CD4-positive, alpha-beta memory T cell (primary cell): ENCODE measurements at regions of chr14 and their contacts with region 1.

Region 1: GRCh38 chr14:70600382-70601157 is at the start of gene MED6:
- DNase-seq: peak; percentile 89 to 95 (median 90)
- H3K4me3 ChIP-seq: peak within 1 kb of the TSS; percentile 99
- H3K4me3 Mint-ChIP-seq: peak within 1 kb of the TSS; percentile 96 to 100 (median 100)
- H3K27ac ChIP-seq: peak within 1 kb of the TSS; percentile 77
- H3K27ac Mint-ChIP-seq: peak within 1 kb of the TSS; percentile 87 to 99 (median 98)
- H3K4me1 ChIP-seq: peaks cover 21% of the 10 kb centered on the region
- H3K4me1 Mint-ChIP-seq: peaks cover 12 to 34% (median 22%) of the 10 kb centered on the region in 4 donors
- H3K27me3 ChIP-seq: no peaks in the 10 kb centered on the region
- H3K27me3 Mint-ChIP-seq: peaks cover 0 to 3% of the 10 kb centered on the region in 2 donors
- total RNA-seq, gene MED6: 57.0 to 61.8 TPM

Region 2: DNA sequence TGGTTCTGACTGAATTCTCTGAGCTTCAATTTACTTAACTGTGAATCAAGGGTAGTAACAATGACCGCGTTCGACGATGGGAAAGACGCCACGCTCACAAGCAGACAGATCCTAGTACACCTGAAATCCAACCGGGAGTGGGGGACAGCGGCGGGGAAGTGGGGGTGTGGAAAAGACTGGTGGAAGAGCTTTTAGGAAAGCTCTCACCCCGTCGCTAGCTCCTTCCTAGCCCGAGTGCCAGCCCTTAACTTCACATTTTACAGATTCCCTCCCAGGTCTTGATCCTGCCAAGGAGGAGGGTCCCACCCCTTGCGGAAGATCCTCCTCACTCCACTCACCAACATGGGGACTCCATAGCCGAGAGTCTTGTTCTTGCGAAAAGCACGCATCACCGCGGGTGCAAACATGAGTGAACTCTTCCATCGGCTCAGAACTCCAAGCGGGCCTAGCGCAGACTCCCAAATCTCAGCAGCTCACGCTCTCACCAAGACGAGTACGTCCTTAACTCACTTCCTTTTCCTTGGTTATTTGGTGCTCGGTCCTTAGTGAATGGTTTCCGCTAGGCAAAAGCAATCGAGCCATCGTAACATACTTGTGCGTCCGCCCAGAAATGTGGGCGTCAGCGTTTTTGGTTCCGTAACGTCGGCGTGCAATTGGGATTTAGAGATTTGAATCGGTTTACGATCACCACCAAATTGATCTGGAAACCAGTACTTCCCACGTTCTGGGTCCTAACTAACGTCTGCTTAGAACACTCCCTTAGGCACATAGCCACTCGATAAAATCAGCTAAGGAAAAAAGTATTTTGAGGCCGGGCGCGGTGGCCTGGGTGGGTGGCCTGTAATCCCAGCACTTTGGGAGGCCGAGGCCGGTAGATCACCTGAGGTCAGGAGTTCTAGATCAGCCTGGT is 241.1 kb before region 1 on chr14 and contains the start of gene COX16:
- CTCF ChIA-PET with region 1: no interaction called
- POLR2A ChIA-PET with region 1: no interaction called
- intact Hi-C with region 1: loop called (anchors 1 kb)
- DNase-seq: peak; percentile 76 to 88 (median 82)
- H3K4me3 ChIP-seq: peak within 1 kb of the TSS; percentile 70 to 95
- H3K4me3 Mint-ChIP-seq: peak within 1 kb of the TSS; percentile 96 to 100 (median 100)
- H3K27ac ChIP-seq: peak within 1 kb of the TSS; percentile 62
- H3K27ac Mint-ChIP-seq: peak within 1 kb of the TSS; percentile 84 to 98 (median 97)
- H3K4me1 ChIP-seq: peaks cover 40% of the 10 kb centered on the region
- H3K4me1 Mint-ChIP-seq: peaks cover 35 to 53% (median 45%) of the 10 kb centered on the region in 4 donors
- H3K27me3 ChIP-seq: no peaks in the 10 kb centered on the region
- H3K27me3 Mint-ChIP-seq: no peaks in the 10 kb centered on the region
- total RNA-seq, gene COX16: 24.5 to 26.2 TPM

Region 3: GRCh38 chr14:70416725-70417349 is 183.7 kb before region 1 on chr14 and contains the start of gene SYNJ2BP:
- CTCF ChIA-PET with region 1: no interaction called
- POLR2A ChIA-PET with region 1: no interaction called
- intact Hi-C with region 1: loop called (anchors 10 kb)
- DNase-seq: peak; percentile 46 to 59 (median 57)
- H3K4me3 ChIP-seq: peak within 1 kb of the TSS; percentile 81 to 87
- H3K4me3 Mint-ChIP-seq: peak within 1 kb of the TSS; percentile 90 to 99 (median 94)
- H3K27ac ChIP-seq: peak within 1 kb of the TSS; percentile 59
- H3K27ac Mint-ChIP-seq: peak within 1 kb of the TSS; percentile 84 to 97 (median 90)
- H3K4me1 ChIP-seq: peaks cover 30% of the 10 kb centered on the region
- H3K4me1 Mint-ChIP-seq: peaks cover 15 to 48% (median 31%) of the 10 kb centered on the region in 4 donors
- H3K27me3 ChIP-seq: no peaks in the 10 kb centered on the region
- H3K27me3 Mint-ChIP-seq: peaks cover 2 to 4% of the 10 kb centered on the region in 2 donors
- total RNA-seq, gene SYNJ2BP: 17.0 to 19.8 TPM

Region 4: DNA sequence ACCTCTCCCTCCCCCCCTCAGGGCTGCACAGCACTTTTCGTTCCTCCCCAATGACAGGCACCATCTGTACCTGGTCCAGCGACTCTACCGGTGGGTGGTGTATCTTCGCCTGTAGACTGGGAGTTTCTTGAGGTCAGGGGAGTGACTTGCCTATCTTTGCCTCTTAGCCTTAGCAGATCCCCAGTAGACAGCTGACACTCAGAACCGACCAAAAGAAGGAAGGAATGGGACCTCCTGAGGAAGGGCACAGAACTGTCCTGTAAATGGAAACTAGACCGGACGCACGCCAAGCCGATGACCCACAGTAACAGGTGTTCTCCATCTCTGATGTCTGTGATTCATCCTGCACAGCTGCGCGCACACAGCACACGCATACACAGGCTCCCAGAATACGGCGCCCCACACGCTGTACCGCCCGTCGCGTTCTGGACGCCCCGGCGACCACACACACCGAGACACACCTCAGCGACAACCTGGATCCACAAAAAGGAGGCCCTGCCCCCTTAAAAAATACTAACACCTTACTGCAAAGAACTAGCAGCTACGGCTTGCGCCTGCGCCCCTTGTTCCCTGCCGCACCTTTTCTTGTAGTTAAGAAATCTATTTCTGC is 40.5 kb after region 1 on chr14:
- CTCF ChIA-PET with region 1: interaction called, 3 read pairs
- POLR2A ChIA-PET with region 1: interaction called, 9 read pairs
- intact Hi-C with region 1: loop called (anchors 2 kb)
- DNase-seq: peak; percentile 52 to 78 (median 59)
- H3K4me3 ChIP-seq: peak overlapping the region; percentile 78 to 85
- H3K4me3 Mint-ChIP-seq: peak overlapping the region; percentile 95 to 100 (median 97)
- H3K27ac ChIP-seq: peak overlapping the region; percentile 56
- H3K27ac Mint-ChIP-seq: peak overlapping the region; percentile 88 to 98 (median 95)
- H3K4me1 ChIP-seq: peaks cover 48% of the 10 kb centered on the region
- H3K4me1 Mint-ChIP-seq: peaks cover 35 to 64% (median 47%) of the 10 kb centered on the region in 4 donors
- H3K27me3 ChIP-seq: no peaks in the 10 kb centered on the region
- H3K27me3 Mint-ChIP-seq: peaks cover 0 to 1% of the 10 kb centered on the region in 2 donors

Region 5: GRCh38 chr14:70655110-70655826 is 54.7 kb after region 1 on chr14:
- CTCF ChIA-PET with region 1: interaction called, 3 read pairs
- POLR2A ChIA-PET with region 1: interaction called, 5 read pairs
- intact Hi-C with region 1: loop called (anchors 2 kb)
- DNase-seq: peak; percentile 82 to 92 (median 86)
- H3K4me3 ChIP-seq: peak overlapping the region in 1 of 2 donors; percentile 41
- H3K4me3 Mint-ChIP-seq: peak overlapping the region; percentile 76 to 95 (median 85)
- H3K27ac ChIP-seq: peak overlapping the region; percentile 77
- H3K27ac Mint-ChIP-seq: peak overlapping the region; percentile 93 to 99 (median 99)
- H3K4me1 ChIP-seq: peaks cover 90% of the 10 kb centered on the region
- H3K4me1 Mint-ChIP-seq: peaks cover 70 to 96% (median 87%) of the 10 kb centered on the region in 4 donors
- H3K27me3 ChIP-seq: no peaks in the 10 kb centered on the region
- H3K27me3 Mint-ChIP-seq: no peaks in the 10 kb centered on the region

Region 6: DNA sequence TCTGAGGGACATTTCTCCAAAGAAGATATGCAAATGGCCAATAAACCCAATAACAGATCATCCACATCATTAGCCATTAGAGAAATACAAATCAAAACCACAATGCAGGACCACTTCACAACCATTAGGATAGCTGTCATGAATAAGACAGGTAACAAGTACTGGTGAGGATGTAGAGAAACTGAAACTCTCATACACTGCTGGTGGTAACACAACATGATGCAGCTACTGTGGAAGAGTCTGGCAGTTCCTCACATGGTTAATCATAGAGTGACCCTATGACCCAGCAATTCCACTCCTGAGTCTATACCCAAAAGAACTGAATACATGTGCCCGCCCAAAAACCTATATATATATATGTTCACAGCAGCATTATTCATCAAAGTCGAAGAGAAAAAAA is 80.2 kb after region 1 on chr14:
- CTCF ChIA-PET with region 1: no interaction called
- POLR2A ChIA-PET with region 1: no interaction called
- intact Hi-C with region 1: no loop called
- DNase-seq: no peak
- H3K4me3 ChIP-seq: no peak overlapping the region
- H3K4me3 Mint-ChIP-seq: no peak overlapping the region
- H3K27ac ChIP-seq: no peak overlapping the region
- H3K27ac Mint-ChIP-seq: no peak overlapping the region
- H3K4me1 ChIP-seq: no peaks in the 10 kb centered on the region
- H3K4me1 Mint-ChIP-seq: peaks cover 0 to 5% (median under 1%) of the 10 kb centered on the region in 4 donors
- H3K27me3 ChIP-seq: no peaks in the 10 kb centered on the region
- H3K27me3 Mint-ChIP-seq: no peaks in the 10 kb centered on the region

Region 7: DNA sequence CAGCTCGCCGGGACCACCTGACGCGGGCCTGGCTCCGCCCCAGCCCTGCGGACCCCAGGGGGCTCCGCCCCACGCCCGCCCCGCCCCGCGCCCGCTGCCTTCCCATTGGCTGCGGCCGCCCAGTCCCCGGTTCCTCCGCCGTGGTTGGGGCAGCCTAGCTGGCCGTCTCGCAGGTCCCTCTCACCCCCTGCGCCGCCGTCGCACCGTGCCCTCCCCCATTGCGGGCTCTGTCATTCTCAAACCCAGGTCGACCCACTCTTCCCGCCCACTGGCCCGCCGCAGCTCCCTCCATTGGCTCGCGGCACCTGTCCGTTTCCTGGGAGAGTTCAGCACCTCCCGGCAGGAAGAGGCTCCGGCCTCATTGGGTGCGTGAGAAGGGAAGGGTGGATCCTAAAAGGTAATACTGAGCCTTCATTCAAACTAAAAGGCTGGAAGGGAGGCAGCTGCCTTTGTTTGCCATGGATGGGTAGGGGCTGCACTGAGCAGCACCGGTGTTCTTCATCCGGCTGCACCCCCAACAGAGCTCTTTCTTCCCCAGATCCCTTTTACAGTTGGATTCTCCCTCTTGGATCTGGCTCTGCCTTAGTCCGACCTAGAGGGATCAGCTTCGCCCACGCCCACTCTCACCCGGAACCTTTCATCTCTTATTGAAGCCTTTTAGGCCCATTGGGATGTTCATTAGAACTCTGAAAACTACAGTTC is 209.1 kb after region 1 on chr14:
- CTCF ChIA-PET with region 1: no interaction called
- POLR2A ChIA-PET with region 1: interaction called, 4 read pairs
- intact Hi-C with region 1: loop called (anchors 2 kb)
- DNase-seq: peak; percentile 79 to 91 (median 82)
- H3K4me3 ChIP-seq: peak overlapping the region; percentile 48 to 75
- H3K4me3 Mint-ChIP-seq: peak overlapping the region in 2 of 8 donors; percentile 93 to 94
- H3K27ac ChIP-seq: peak overlapping the region; percentile 54
- H3K27ac Mint-ChIP-seq: peak overlapping the region in 4 of 7 donors; percentile 73 to 90 (median 83)
- H3K4me1 ChIP-seq: peaks cover 17% of the 10 kb centered on the region
- H3K4me1 Mint-ChIP-seq: peaks cover 8 to 22% (median 12%) of the 10 kb centered on the region in 4 donors
- H3K27me3 ChIP-seq: no peaks in the 10 kb centered on the region
- H3K27me3 Mint-ChIP-seq: no peaks in the 10 kb centered on the region